ENCODE measurements at regions of chr2 and their contacts with region 1.

Region 1: GRCh38 chr2:157327621-157328500 is 2.2 kb upstream of the ERMN start:
- DNase-seq: peak; percentile 76
- H3K4me3 ChIP-seq: no peak overlapping the region
- H3K27ac ChIP-seq: no peak overlapping the region
- H3K4me1 ChIP-seq: peaks cover 19% of the 10 kb centered on the region
- H3K27me3 ChIP-seq: no peaks in the 10 kb centered on the region
- CTCF ChIP-seq: peak; percentile 93

Region 2: GRCh38 chr2:157492189-157492773 is 164.4 kb after region 1 on chr2:
- intact Hi-C with region 1: loop called (anchors 10 kb)
- DNase-seq: peak; percentile 41
- H3K4me3 ChIP-seq: no peak overlapping the region
- H3K27ac ChIP-seq: no peak overlapping the region
- H3K4me1 ChIP-seq: no peaks in the 10 kb centered on the region
- H3K27me3 ChIP-seq: no peaks in the 10 kb centered on the region
- CTCF ChIP-seq: peak; percentile 76

Measured in left ventricle myocardium inferior (tissue), 1 donor.